HAP-1 (cell line): ENCODE measurements at regions of chr22 and their contacts with region 1.

Region 1: DNA sequence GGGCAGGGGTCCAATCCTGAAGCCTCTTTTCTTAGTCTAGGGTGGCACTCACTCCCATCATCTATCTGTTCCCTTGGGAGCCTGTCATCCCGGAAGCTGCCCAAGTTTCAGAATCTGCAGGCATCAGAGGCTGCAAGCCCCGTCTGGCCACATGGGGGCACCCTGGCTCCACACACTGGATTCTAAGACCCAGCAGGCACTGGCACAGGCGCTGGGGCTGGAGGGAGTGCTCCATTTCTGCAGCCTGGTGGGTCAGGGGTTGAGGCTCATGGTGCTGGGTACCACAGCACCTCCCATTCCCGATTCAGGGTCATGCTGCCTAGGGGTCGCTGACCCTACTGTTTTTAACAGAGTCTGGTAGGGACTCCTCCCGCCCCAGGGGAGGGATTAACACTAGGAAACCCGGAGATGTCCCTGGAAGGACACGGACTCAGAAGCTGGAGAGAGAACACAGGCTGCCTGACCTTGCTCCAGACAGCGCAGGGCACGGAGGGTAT is 243.9 kb upstream of the SYN3 start:
- DNase-seq: peak; percentile 43 to 91
- H3K4me3 ChIP-seq: no peak overlapping the region
- H3K4me1 ChIP-seq: no peaks in the 10 kb centered on the region
- H3K27me3 ChIP-seq: no peaks in the 10 kb centered on the region

Region 2: GRCh38 chr22:33579448-33580093 is 277.5 kb after region 1 on chr22:
- in situ Hi-C with region 1: loop called (anchors 5 kb)
- DNase-seq: peak; percentile 15 to 84
- H3K4me3 ChIP-seq: no peak overlapping the region
- H3K4me1 ChIP-seq: no peaks in the 10 kb centered on the region; the same call in 1 of the 2 replicates
- H3K27me3 ChIP-seq: no peaks in the 10 kb centered on the region